ENCODE measurements at regions of chr3 and their contacts with region 1.

Region 1: DNA sequence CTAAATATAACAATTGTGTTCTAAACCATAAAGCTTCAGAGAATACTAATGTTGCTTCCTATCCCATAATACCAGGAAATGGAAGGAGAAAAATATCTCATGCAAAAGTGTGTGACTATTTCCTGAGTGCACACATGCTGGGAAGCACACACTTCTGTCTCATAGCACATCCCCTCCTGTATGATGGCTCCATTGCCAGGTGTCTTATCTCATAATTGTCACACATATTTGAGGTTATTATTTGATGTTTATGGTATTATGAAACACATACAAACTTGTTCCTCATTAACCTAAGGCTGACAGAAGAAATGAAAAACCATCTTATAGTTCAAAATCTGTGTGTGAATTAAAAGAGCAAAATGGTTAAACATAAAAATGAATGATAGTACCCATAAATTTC is 65.4 kb downstream of the SERP1 start:
- DNase-seq: no peak
- H3K4me3 ChIP-seq: no peak overlapping the region
- H3K27ac ChIP-seq: no peak overlapping the region
- H3K4me1 ChIP-seq: no peaks in the 10 kb centered on the region
- H3K27me3 ChIP-seq: no peaks in the 10 kb centered on the region
- CTCF ChIP-seq: no peak

Region 2: GRCh38 chr3:150391200-150391599 is 89.7 kb before region 1 on chr3:
- CTCF ChIA-PET with region 1: no interaction called
- POLR2A ChIA-PET with region 1: no interaction called
- intact Hi-C with region 1: no loop called
- DNase-seq: no peak
- H3K4me3 ChIP-seq: no peak overlapping the region
- H3K27ac ChIP-seq: no peak overlapping the region
- H3K4me1 ChIP-seq: peaks cover 10% of the 10 kb centered on the region; the same call in 1 of the 2 replicates
- H3K27me3 ChIP-seq: no peaks in the 10 kb centered on the region
- CTCF ChIP-seq: no peak

Region 3: GRCh38 chr3:150528354-150528797 is 47.5 kb after region 1 on chr3:
- CTCF ChIA-PET with region 1: no interaction called
- POLR2A ChIA-PET with region 1: interaction called, 12 read pairs
- intact Hi-C with region 1: no loop called
- DNase-seq: peak in 1 of 2 experiments; percentile 38
- H3K4me3 ChIP-seq: no peak overlapping the region
- H3K27ac ChIP-seq: no peak overlapping the region
- H3K4me1 ChIP-seq: no peaks in the 10 kb centered on the region
- H3K27me3 ChIP-seq: no peaks in the 10 kb centered on the region
- CTCF ChIP-seq: peak; percentile 59

Region 4: GRCh38 chr3:151852074-151852811 is 1371.4 kb after region 1 on chr3:
- CTCF ChIA-PET with region 1: no interaction called
- POLR2A ChIA-PET with region 1: no interaction called
- intact Hi-C with region 1: no loop called
- DNase-seq: no peak
- H3K4me3 ChIP-seq: no peak overlapping the region
- H3K27ac ChIP-seq: no peak overlapping the region
- H3K4me1 ChIP-seq: no peaks in the 10 kb centered on the region
- H3K27me3 ChIP-seq: no peaks in the 10 kb centered on the region
- CTCF ChIP-seq: no peak

Measured in PC-9 (cell line).